SK-N-SH (cell line): ENCODE measurements at regions of chr7 and their contacts with region 1.

Region 1: GRCh38 chr7:111752022-111752582 is 189.8 kb upstream of the IMMP2L start:
- DNase-seq: peak; percentile 72
- H3K4me3 ChIP-seq: peak overlapping the region in 1 of 2 experiments; percentile 28; a peak in 1 of 4 replicates
- H3K27ac ChIP-seq: no peak overlapping the region
- H3K4me1 ChIP-seq: peaks cover 0 to 10% of the 10 kb centered on the region in 2 experiments; a peak in 2 of 4 replicates
- H3K27me3 ChIP-seq: no peaks in the 10 kb centered on the region
- CTCF ChIP-seq: peak; percentile 100
- EP300 ChIP-seq: no peak
- RAD21 ChIP-seq: peak; percentile 78

Region 2: GRCh38 chr7:112206238-112207044 is 454.3 kb after region 1 on chr7 and contains the starts of genes DOCK4 and ZNF277:
- CTCF ChIA-PET with region 1: interaction called, 10 read pairs
- POLR2A ChIA-PET with region 1: no interaction called
- DNase-seq: peak; percentile 98
- H3K4me3 ChIP-seq: peak within 1 kb of the TSS; percentile 82 to 99
- H3K27ac ChIP-seq: peak within 1 kb of the TSS; percentile 71 to 92
- H3K4me1 ChIP-seq: peaks cover 0 to 18% of the 10 kb centered on the region in 2 experiments; a peak in 2 of 4 replicates
- H3K27me3 ChIP-seq: no peaks in the 10 kb centered on the region
- CTCF ChIP-seq: no peak
- EP300 ChIP-seq: no peak; a peak in 1 of 4 replicates
- RAD21 ChIP-seq: peak; percentile 41
- polyA plus RNA-seq, gene DOCK4: 8.5 and 8.9 TPM in 2 replicates
- polyA plus RNA-seq, gene ZNF277: 11.5 and 12.9 TPM in 2 replicates

Region 3: DNA sequence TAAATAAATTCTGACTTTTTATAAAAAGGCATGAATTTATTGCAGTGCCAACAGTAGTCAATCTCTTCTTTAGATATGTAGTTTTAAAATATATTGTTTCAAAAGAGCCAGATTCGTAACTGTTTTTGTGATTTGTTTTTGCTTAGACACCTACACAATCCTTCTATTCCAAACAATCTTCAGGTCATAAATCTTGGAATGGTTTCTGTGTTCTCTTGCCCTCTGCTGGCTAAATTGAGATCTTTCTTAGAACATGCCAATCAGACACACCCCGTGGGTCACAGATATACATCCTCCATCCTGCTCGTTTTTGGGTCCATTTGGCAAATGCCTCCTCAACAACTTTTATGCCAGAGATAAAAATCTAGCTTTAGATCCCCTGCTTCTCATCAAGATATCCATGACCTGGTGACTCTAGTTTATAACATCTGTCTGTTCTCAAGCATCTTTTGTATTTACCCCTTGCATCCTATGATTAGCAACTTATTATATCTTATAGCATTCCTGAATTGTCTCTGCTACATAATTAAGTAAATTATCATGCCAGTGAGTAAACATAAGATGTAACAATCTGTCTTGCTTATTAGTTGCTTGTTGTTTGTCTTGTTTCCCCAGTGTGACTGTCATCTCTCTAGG is 662.9 kb after region 1 on chr7:
- CTCF ChIA-PET with region 1: interaction called, 14 read pairs
- POLR2A ChIA-PET with region 1: no interaction called
- DNase-seq: peak; percentile 57
- H3K4me3 ChIP-seq: no peak overlapping the region
- H3K27ac ChIP-seq: no peak overlapping the region
- H3K4me1 ChIP-seq: peaks cover 0 to 11% of the 10 kb centered on the region in 2 experiments; a peak in 2 of 4 replicates
- H3K27me3 ChIP-seq: no peaks in the 10 kb centered on the region
- CTCF ChIP-seq: peak; percentile 85
- EP300 ChIP-seq: no peak
- RAD21 ChIP-seq: peak; percentile 84

Region 4: DNA sequence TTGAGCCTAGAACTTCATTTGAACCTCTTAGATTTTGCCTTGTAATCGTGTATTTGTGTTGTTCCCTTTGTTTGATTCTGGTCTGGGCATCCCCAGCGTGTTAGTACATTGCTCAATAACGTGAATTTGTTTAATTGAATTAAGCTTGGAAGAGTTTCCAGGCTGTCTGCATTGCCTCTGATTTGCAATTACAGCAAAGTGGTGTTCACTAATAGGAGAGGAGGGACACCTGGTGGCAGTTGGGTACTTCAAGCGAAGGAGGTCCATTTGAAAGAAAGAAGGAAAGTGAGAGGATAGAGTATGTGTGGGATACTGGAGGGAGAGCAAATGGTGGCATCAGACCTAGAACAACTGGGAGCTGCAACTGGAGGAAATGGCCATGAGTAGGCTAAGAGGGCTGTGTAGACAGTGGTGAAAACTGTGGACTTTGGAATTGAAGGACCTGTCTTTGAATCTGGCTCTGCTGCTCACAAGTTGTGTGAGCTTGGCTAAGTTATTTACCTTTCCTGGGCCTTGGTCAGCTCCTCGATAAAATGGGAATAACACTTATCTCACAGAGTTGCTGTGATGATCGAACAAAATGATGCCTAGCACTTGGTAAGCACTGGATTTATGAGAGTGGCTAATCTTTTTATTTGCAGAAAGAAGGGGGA is 743.8 kb after region 1 on chr7:
- CTCF ChIA-PET with region 1: interaction called, 24 read pairs
- POLR2A ChIA-PET with region 1: no interaction called
- DNase-seq: peak; percentile 57
- H3K4me3 ChIP-seq: no peak overlapping the region
- H3K27ac ChIP-seq: peak overlapping the region; percentile 35 to 70; a peak in 2 of 4 replicates
- H3K4me1 ChIP-seq: peaks cover 5 to 11% of the 10 kb centered on the region in 2 experiments; a peak in 3 of 4 replicates
- H3K27me3 ChIP-seq: no peaks in the 10 kb centered on the region
- CTCF ChIP-seq: peak; percentile 83
- EP300 ChIP-seq: no peak
- RAD21 ChIP-seq: peak; percentile 90